ENCODE measurements at regions of chr5 and their contacts with region 1.

Region 1: GRCh38 chr5:142748568-142749249 is 21.5 kb upstream of the ARHGAP26 start:
- DNase-seq: peak; percentile 70
- ATAC-seq: peak; percentile 74
- H3K4me3 Mint-ChIP-seq: no peak overlapping the region
- H3K27ac Mint-ChIP-seq: no peak overlapping the region
- H3K4me1 Mint-ChIP-seq: peaks cover 13% of the 10 kb centered on the region
- H3K27me3 Mint-ChIP-seq: peaks cover 11% of the 10 kb centered on the region

Region 2: DNA sequence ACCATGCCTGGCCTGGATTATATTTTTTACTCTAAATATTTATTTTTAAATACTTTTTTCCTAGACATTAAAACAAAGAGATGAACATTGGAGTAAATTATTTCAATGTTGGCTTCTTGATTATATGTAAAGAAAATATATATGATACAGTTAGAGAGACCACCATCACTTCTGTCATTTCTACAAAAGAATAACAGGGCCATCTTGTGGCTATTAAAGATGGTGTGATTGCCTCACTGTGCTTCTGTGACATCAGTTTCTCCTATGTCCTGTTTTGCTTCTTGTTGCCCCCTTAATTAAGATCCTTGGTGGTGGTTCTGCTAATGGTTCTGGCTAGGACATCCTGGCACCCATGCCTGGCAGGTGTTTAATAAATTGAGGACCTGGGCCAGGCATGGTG is 607.2 kb before region 1 on chr5:
- CTCF ChIA-PET with region 1: no interaction called
- DNase-seq: no peak
- ATAC-seq: no peak
- H3K4me3 Mint-ChIP-seq: no peak overlapping the region
- H3K27ac Mint-ChIP-seq: no peak overlapping the region
- H3K4me1 Mint-ChIP-seq: no peaks in the 10 kb centered on the region
- H3K27me3 Mint-ChIP-seq: no peaks in the 10 kb centered on the region

Region 3: DNA sequence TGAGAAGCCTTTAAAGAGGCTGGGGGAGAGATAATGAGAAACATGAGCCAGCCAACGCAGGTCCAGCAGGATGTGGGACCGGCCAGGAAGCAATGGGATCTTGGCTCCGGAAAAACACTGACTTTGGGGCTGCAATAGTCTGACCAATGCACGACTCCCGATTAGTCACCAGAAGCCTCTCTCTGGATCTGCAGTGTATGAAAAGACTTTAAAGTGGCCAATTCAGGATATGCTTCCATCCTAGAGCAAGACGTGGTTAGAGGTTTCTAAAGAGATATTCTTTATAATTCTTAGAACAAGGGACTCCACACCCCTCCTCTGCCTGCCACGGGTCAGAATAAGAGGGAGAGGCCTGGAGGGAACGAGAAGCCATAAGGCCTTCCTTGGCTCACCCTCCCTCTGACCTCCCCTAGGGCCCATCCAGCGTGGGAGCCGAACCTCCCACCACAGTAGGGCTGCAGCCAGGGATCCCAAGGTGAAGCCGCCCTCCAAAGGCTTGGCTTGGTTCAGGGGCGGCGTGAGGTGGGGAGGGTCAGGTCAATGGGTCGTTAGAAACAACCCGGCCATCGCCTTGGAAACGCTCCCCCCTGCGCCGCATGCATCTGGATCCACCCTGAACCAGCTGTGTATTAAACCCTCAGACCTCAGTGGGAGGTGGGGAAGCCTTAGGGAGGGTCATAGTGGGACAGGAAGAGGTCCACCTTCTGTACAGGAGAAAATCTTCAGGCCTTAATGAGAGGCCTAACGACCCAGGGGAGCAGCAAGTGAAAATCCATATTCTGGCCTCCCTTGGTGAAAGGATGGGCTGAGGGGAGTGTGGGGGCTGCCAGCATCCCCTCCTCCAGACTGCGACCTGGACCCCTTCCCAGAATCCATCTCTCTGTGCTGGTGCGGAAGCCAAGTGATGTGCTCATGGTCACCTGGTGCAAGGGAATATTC is 73.9 kb before region 1 on chr5:
- CTCF ChIA-PET with region 1: no interaction called
- DNase-seq: no peak
- ATAC-seq: no peak
- H3K4me3 Mint-ChIP-seq: no peak overlapping the region
- H3K27ac Mint-ChIP-seq: no peak overlapping the region
- H3K4me1 Mint-ChIP-seq: no peaks in the 10 kb centered on the region
- H3K27me3 Mint-ChIP-seq: peaks cover 9% of the 10 kb centered on the region

Region 4: DNA sequence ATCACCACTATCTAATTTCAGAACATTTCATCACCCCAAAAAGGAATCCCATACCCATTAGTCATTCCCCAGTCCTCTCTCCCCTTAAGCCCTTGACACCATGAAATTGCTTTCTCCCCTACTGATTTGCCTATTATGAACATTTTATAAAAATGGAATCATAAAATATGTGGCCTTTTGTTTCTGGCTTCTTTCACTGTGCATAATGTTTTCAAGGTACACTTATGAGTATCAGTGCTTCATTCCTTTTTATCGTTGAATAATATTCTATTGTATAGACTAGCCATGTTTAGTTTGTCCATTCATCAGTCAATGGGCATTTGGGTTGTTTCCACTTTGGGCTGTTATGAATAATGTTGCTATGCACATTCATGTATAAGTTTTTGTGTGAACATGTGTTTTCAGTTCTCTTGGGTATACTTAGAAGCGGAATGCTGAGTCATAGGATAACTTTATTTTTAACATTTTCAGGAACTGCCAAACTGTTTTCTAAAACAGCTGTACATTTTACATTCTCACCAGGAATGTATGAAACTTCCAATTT is 22.4 kb before region 1 on chr5:
- CTCF ChIA-PET with region 1: no interaction called
- DNase-seq: no peak
- ATAC-seq: no peak
- H3K4me3 Mint-ChIP-seq: no peak overlapping the region
- H3K27ac Mint-ChIP-seq: no peak overlapping the region
- H3K4me1 Mint-ChIP-seq: peaks cover 8% of the 10 kb centered on the region
- H3K27me3 Mint-ChIP-seq: no peaks in the 10 kb centered on the region

Region 5: GRCh38 chr5:142737179-142737578 is 11.5 kb before region 1 on chr5:
- CTCF ChIA-PET with region 1: interaction called, 16 read pairs
- DNase-seq: no peak
- ATAC-seq: no peak
- H3K4me3 Mint-ChIP-seq: no peak overlapping the region
- H3K27ac Mint-ChIP-seq: no peak overlapping the region
- H3K4me1 Mint-ChIP-seq: peaks cover 18% of the 10 kb centered on the region
- H3K27me3 Mint-ChIP-seq: peaks cover 4% of the 10 kb centered on the region

Region 6: GRCh38 chr5:142847881-142848790 is 99.4 kb after region 1 on chr5:
- CTCF ChIA-PET with region 1: interaction called, 11 read pairs
- DNase-seq: no peak
- ATAC-seq: no peak
- H3K4me3 Mint-ChIP-seq: no peak overlapping the region
- H3K27ac Mint-ChIP-seq: no peak overlapping the region
- H3K4me1 Mint-ChIP-seq: peaks cover 36% of the 10 kb centered on the region
- H3K27me3 Mint-ChIP-seq: no peaks in the 10 kb centered on the region

Region 7: GRCh38 chr5:142874537-142874936 is 125.8 kb after region 1 on chr5:
- CTCF ChIA-PET with region 1: interaction called, 132 read pairs
- DNase-seq: no peak
- ATAC-seq: no peak
- H3K4me3 Mint-ChIP-seq: no peak overlapping the region
- H3K27ac Mint-ChIP-seq: no peak overlapping the region
- H3K4me1 Mint-ChIP-seq: peaks cover 2% of the 10 kb centered on the region
- H3K27me3 Mint-ChIP-seq: no peaks in the 10 kb centered on the region

Region 8: GRCh38 chr5:142888469-142889085 is 139.9 kb after region 1 on chr5:
- CTCF ChIA-PET with region 1: interaction called, 132 read pairs
- DNase-seq: no peak
- ATAC-seq: no peak
- H3K4me3 Mint-ChIP-seq: no peak overlapping the region
- H3K27ac Mint-ChIP-seq: no peak overlapping the region
- H3K4me1 Mint-ChIP-seq: peaks cover 8% of the 10 kb centered on the region
- H3K27me3 Mint-ChIP-seq: no peaks in the 10 kb centered on the region

Measured in activated CD8-positive, alpha-beta memory T cell treated with anti-CD3 and anti-CD28 coated beads, Interleukin-2, amount 10 ng/mL, durations not matched to agents 7 days and 5 days (primary cell).